AG04449 (cell line): ENCODE measurements at regions of chr18 and their contacts with region 1.

Region 1: DNA sequence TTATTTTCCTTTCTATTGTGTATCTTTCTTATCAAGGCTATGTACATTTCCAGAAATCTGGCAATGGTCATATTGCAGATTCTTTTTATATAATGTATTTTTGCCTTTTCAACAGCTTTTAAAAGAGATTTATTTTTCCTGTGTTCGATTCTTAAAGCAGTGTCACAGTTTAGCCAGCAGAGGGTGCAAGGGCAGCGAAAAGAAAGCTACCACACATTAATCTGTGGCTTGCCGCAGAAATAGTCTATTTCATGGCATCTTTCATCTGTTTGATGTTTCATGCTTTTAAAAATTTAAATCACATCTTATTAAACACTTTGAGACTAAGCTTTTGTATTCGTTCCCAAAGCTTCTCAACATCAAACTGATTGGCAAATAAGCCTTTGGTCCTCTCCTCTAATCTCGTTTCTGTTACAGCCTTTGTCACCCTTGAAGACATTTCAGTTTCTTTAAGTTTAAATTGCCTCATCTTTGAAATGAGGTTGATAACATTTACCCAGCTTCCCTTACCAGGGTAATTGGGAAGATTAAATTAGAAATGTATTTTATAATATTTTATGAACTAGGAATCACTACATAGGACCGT is 73.3 kb downstream of the PIK3C3 start:
- DNase-seq: no peak
- H3K4me3 ChIP-seq: no peak overlapping the region
- CTCF ChIP-seq: peak; percentile 78

Region 2: DNA sequence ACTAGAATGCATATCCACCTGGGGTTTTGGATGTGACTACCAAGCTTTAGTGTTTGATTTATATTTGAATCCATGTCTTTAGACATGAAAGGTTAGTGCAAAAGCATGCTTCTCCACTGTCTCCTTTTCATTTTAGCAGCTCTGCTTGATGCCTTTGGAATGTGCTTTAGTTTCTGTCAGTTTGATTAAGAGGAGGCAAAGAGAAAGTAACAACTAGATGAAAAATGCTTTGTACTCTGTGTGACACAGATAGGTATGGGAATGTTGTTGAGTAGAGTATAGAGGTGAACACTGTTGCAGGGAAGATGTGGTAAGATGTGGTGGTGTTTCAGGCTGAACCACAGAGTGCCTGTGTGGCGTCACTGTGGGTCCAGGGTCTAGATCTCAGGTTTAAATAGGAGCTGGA is 53.5 kb before region 1 on chr18:
- CTCF ChIA-PET with region 1: interaction called, 12 read pairs
- POLR2A ChIA-PET with region 1: no interaction called
- DNase-seq: no peak
- H3K4me3 ChIP-seq: no peak overlapping the region
- CTCF ChIP-seq: no peak

Region 3: DNA sequence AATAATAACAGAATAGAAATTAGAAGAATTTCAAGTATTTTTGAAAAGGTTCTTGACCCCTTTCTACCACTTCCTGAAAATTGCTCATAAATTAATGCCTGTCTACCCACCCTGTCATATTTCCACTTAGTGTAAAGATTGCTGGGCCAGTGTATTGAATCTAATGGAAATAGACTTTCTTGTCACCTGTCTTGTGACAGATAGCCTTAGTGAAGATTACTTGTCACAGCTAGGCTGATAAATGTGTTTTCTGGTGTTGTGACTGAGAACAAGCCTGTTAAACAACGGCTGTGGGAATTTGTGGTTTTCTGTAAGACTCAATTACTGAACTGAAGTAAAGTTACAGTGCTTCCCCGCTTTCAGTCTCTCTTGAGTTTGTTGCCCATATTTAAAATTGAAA is 36.3 kb before region 1 on chr18:
- CTCF ChIA-PET with region 1: interaction called, 17 read pairs
- POLR2A ChIA-PET with region 1: no interaction called
- DNase-seq: no peak
- H3K4me3 ChIP-seq: no peak overlapping the region
- CTCF ChIP-seq: no peak

Region 4: GRCh38 chr18:42005782-42006181 is 22.6 kb before region 1 on chr18:
- CTCF ChIA-PET with region 1: interaction called, 209 read pairs
- POLR2A ChIA-PET with region 1: no interaction called
- DNase-seq: no peak
- H3K4me3 ChIP-seq: no peak overlapping the region
- CTCF ChIP-seq: no peak

Region 5: DNA sequence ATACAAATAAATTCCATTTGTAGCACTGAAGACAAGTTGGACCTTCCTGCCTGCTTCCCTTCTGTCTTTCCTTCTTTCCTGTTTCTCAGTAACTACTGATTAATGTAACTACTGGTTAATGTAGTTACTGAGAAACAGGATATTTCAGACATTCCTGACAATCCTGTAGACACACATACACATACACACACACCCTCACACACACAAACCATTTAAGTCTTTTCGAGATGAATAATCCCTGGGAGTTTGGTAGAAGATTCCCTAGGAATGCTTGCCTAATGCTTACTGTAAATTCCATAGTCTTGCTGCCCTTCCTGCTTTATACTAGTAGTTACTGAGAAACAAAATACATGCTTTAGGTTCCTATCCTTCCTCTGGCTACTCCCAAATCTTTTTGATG is 10.6 kb after region 1 on chr18:
- CTCF ChIA-PET with region 1: interaction called, 63 read pairs
- POLR2A ChIA-PET with region 1: no interaction called
- DNase-seq: peak; percentile 98
- H3K4me3 ChIP-seq: no peak overlapping the region
- CTCF ChIP-seq: no peak

Region 6: GRCh38 chr18:42053188-42053781 is 24.9 kb after region 1 on chr18:
- CTCF ChIA-PET with region 1: interaction called, 52 read pairs
- POLR2A ChIA-PET with region 1: no interaction called
- DNase-seq: no peak
- H3K4me3 ChIP-seq: no peak overlapping the region
- CTCF ChIP-seq: peak; percentile 66

Region 7: GRCh38 chr18:42339372-42339771 is 311.0 kb after region 1 on chr18:
- CTCF ChIA-PET with region 1: no interaction called
- POLR2A ChIA-PET with region 1: no interaction called
- DNase-seq: no peak
- H3K4me3 ChIP-seq: no peak overlapping the region
- CTCF ChIP-seq: no peak